Naive thymus-derived CD4-positive, alpha-beta T cell (primary cell): ENCODE measurements at regions of chr1 and their contacts with region 1.

Region 1: GRCh38 chr1:178542560-178543356 is 29.8 kb downstream of the TEX35 start:
- DNase-seq: peak; percentile 61 to 98 (median 87)
- ATAC-seq: peak; percentile 96
- H3K4me3 ChIP-seq: peak overlapping the region; percentile 99
- H3K4me3 Mint-ChIP-seq: peak overlapping the region; percentile 89 to 96 (median 92)
- H3K27ac ChIP-seq: peak overlapping the region; percentile 56
- H3K27ac Mint-ChIP-seq: peak overlapping the region; percentile 32 to 88 (median 83)
- H3K4me1 ChIP-seq: peaks cover 0 to 5% of the 10 kb centered on the region in 2 donors
- H3K4me1 Mint-ChIP-seq: peaks cover 0 to 15% (median 10%) of the 10 kb centered on the region in 7 donors
- H3K27me3 ChIP-seq: no peaks in the 10 kb centered on the region
- H3K27me3 Mint-ChIP-seq: no peaks in the 10 kb centered on the region

Region 2: GRCh38 chr1:178532392-178532791 is 10.4 kb before region 1 on chr1:
- CTCF ChIA-PET with region 1: interaction called, 5 read pairs
- POLR2A ChIA-PET with region 1: no interaction called
- intact Hi-C with region 1: loop called in 1 of 2 experiments (anchors 1 kb)
- DNase-seq: peak; percentile 42 to 74 (median 63)
- ATAC-seq: peak; percentile 92
- H3K4me3 ChIP-seq: no peak overlapping the region
- H3K4me3 Mint-ChIP-seq: peak overlapping the region in 1 of 10 donors; percentile 27
- H3K27ac ChIP-seq: no peak overlapping the region
- H3K27ac Mint-ChIP-seq: no peak overlapping the region
- H3K4me1 ChIP-seq: peaks cover 0 to 6% of the 10 kb centered on the region in 2 donors
- H3K4me1 Mint-ChIP-seq: peaks cover 0 to 4% (median 4%) of the 10 kb centered on the region in 7 donors
- H3K27me3 ChIP-seq: no peaks in the 10 kb centered on the region
- H3K27me3 Mint-ChIP-seq: peaks cover 0 to 2% (median 0%) of the 10 kb centered on the region in 5 donors

Region 3: GRCh38 chr1:178768423-178768822 is 225.7 kb after region 1 on chr1:
- CTCF ChIA-PET with region 1: no interaction called
- POLR2A ChIA-PET with region 1: no interaction called
- intact Hi-C with region 1: loop called in 1 of 2 experiments (anchors 1 kb)
- DNase-seq: peak in 5 of 9 donors; percentile 3 to 26 (median 15)
- ATAC-seq: peak; percentile 61
- H3K4me3 ChIP-seq: no peak overlapping the region
- H3K4me3 Mint-ChIP-seq: no peak overlapping the region
- H3K27ac ChIP-seq: no peak overlapping the region
- H3K27ac Mint-ChIP-seq: peak overlapping the region in 1 of 9 donors; percentile 16
- H3K4me1 ChIP-seq: no peaks in the 10 kb centered on the region
- H3K4me1 Mint-ChIP-seq: peaks cover 0 to 16% (median 8%) of the 10 kb centered on the region in 7 donors
- H3K27me3 ChIP-seq: no peaks in the 10 kb centered on the region
- H3K27me3 Mint-ChIP-seq: no peaks in the 10 kb centered on the region